Activated naive CD4-positive, alpha-beta T cell treated with anti-CD3 and anti-CD28 coated beads for 36 hours (primary cell): ENCODE measurements at regions of chr5 and their contacts with region 1.

Region 1: GRCh38 chr5:68433923-68434879 is 218.6 kb downstream of the PIK3R1 start:
- DNase-seq: peak; percentile 97
- H3K4me3 Mint-ChIP-seq: peak overlapping the region; percentile 23
- H3K27ac Mint-ChIP-seq: peak overlapping the region; percentile 73
- H3K4me1 Mint-ChIP-seq: peaks cover 51% of the 10 kb centered on the region
- H3K27me3 Mint-ChIP-seq: peaks cover 12% of the 10 kb centered on the region

Region 2: DNA sequence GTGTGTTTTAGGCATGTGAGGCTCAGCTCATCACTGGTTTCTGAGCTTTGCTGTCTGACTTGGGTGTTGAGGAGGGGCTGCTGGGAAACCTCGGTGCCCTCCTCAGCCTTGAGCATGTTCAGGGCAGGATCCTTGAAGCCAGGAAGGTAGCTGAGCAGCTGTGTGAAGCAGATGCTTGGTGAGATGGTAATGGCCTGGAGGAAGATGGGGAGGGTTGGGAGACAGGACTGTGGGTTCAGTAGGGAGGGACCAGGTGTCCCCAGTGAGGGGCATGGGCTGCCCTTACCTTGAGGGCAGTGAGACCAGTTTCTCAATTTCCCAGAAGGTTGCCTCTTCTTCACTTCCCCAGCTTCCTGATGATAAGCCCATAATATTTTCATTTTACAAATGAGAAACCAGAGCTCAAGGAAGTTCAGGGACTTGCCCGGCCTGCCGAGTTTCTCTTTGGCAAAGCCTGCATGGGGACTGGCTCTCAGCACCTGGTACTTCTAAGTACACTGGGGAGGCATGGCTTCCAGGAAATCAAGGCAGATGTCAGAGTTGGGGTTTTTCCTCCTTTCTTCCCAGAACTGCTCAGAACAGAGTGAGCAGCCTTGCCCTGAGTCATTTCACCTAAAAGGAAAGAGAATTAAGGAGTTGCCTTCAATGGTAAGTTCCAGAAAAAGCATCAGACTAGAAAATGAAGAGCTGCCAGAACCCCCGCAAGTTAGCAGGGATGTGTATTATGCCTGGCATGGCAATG is 1612.3 kb before region 1 on chr5:
- CTCF ChIA-PET with region 1: no interaction called
- intact Hi-C with region 1: loop called (anchors 5 kb)
- DNase-seq: peak; percentile 87
- H3K4me3 Mint-ChIP-seq: peak overlapping the region; percentile 33
- H3K27ac Mint-ChIP-seq: peak overlapping the region; percentile 95
- H3K4me1 Mint-ChIP-seq: peaks cover 27% of the 10 kb centered on the region
- H3K27me3 Mint-ChIP-seq: no peaks in the 10 kb centered on the region

Region 3: GRCh38 chr5:67516948-67517565 is 917.1 kb before region 1 on chr5:
- CTCF ChIA-PET with region 1: no interaction called
- intact Hi-C with region 1: loop called (anchors 1 kb)
- DNase-seq: no peak
- H3K4me3 Mint-ChIP-seq: no peak overlapping the region
- H3K27ac Mint-ChIP-seq: no peak overlapping the region
- H3K4me1 Mint-ChIP-seq: peaks cover 47% of the 10 kb centered on the region
- H3K27me3 Mint-ChIP-seq: no peaks in the 10 kb centered on the region

Region 4: DNA sequence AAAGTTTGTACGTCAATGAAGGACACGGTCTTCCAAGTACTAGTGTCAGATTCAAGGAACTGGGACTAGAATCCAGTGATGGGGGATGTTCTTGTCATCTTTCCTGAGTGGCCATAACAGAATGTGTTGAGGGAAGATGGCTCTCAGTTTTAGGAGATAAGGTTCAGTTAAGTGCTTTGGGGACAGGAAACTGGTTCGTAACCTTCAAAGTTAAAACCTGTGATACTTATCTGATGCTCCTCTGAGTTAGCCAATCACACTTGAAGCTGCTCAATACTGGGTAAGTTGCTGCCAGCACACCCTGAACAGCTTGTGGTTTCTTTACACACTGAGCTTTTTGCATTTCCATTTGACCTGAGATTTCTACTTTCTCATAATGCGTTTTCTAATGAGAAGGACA is 154.2 kb before region 1 on chr5:
- CTCF ChIA-PET with region 1: interaction called, 8 read pairs
- intact Hi-C with region 1: loop called (anchors 1 kb)
- DNase-seq: peak; percentile 55
- H3K4me3 Mint-ChIP-seq: peak overlapping the region; percentile 64
- H3K27ac Mint-ChIP-seq: peak overlapping the region; percentile 97
- H3K4me1 Mint-ChIP-seq: peaks cover 77% of the 10 kb centered on the region
- H3K27me3 Mint-ChIP-seq: no peaks in the 10 kb centered on the region

Region 5: DNA sequence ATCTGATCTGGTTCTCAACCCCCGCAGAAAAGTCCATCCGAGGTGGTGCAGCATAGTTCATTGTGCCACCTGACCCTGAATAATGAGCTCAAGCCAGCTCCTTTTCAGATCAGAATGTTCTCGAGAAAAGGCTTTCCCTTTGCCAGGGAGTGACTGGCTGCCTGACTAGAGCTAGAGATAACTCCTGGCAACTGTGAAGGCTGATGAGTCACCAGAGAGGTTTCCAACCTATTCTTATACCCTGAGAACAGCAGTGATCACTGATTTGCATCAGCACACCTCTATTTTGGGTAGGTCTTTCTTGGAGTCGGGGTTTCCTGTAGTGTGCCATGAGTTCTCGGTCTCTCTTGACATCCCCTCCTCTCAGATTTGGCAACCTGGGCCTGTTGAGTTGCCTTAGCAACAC is 90.8 kb before region 1 on chr5:
- CTCF ChIA-PET with region 1: no interaction called
- intact Hi-C with region 1: loop called (anchors 1 kb)
- DNase-seq: peak; percentile 57
- H3K4me3 Mint-ChIP-seq: no peak overlapping the region
- H3K27ac Mint-ChIP-seq: no peak overlapping the region
- H3K4me1 Mint-ChIP-seq: peaks cover 25% of the 10 kb centered on the region
- H3K27me3 Mint-ChIP-seq: no peaks in the 10 kb centered on the region

Region 6: DNA sequence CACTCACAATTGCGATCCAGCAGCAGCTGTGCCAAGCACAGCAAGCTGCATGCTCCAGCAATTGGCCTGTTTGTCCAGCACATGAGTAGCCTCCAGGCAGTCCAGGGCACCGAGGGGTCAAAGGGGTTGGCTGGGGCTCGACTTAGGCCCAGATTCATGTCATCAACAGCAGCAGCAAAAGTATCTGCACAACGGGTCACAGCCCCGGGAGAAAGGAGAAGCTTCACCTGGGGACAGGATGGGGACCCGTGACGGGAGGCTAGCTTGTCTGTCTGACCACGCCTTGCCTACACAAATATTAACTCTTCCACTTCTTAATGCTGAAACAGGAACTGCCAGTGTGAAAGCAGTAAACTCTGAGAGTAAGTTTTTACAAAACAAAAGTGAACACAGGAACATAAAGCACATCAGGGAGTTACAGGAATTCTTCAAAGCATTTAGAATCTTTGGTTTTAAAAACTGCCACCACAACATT is 27.4 kb before region 1 on chr5:
- CTCF ChIA-PET with region 1: interaction called, 4 read pairs
- intact Hi-C with region 1: loop called (anchors 1 kb)
- DNase-seq: no peak
- H3K4me3 Mint-ChIP-seq: no peak overlapping the region
- H3K27ac Mint-ChIP-seq: no peak overlapping the region
- H3K4me1 Mint-ChIP-seq: peaks cover 24% of the 10 kb centered on the region
- H3K27me3 Mint-ChIP-seq: no peaks in the 10 kb centered on the region

Region 7: DNA sequence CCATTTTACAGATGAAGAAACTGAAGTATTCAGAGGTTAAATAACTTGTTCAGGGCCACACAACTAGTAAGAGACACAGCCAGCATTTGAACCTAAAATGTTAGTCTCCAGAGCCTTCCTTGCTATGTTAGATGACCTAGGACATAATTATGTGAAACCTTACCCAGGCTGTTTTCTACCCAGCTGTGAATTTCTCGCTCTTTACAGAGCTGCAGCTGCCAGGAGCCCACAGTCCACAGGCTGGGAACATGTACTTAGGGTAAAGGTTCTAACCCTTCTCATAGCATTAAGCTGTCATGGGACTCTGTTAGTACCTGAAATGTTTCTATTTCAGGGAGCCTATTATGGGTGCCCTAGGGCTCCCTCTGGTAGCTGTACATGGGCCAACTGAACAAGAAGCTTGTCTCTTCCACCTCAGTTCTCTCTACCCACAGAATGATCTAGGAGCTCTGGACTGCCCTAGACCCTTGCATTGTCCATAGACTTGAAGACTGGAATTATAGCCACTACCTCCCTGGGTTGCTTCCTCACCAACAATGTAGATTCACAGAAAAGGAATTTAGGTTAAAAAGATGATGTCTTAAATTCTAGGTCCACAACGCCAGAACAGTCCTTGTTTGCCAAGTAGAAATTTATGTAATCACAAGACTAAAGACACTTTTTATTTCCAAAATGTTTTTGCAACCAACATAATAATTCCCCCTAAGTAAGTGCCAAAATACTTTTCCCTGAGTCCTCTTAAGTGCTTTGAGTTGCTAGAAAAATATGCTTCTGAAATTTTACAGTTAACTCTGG is 44.3 kb after region 1 on chr5:
- CTCF ChIA-PET with region 1: no interaction called
- intact Hi-C with region 1: no loop called
- DNase-seq: no peak
- H3K4me3 Mint-ChIP-seq: no peak overlapping the region
- H3K27ac Mint-ChIP-seq: no peak overlapping the region
- H3K4me1 Mint-ChIP-seq: no peaks in the 10 kb centered on the region
- H3K27me3 Mint-ChIP-seq: peaks cover 2% of the 10 kb centered on the region